SK-N-SH (cell line): ENCODE measurements at regions of chr22 and their contacts with region 1.

Region 1: GRCh38 chr22:46367707-46368191 is 32.2 kb downstream of the TRMU start:
- DNase-seq: peak; percentile 87
- H3K4me3 ChIP-seq: no peak overlapping the region
- H3K27ac ChIP-seq: no peak overlapping the region
- H3K4me1 ChIP-seq: no peaks in the 10 kb centered on the region; a peak in 1 of 4 replicates
- H3K27me3 ChIP-seq: no peaks in the 10 kb centered on the region
- CTCF ChIP-seq: peak; percentile 73
- EP300 ChIP-seq: no peak
- RAD21 ChIP-seq: peak; percentile 66

Region 2: GRCh38 chr22:46329616-46330015 is 38.1 kb before region 1 on chr22:
- CTCF ChIA-PET with region 1: no interaction called
- POLR2A ChIA-PET with region 1: no interaction called
- DNase-seq: no peak
- H3K4me3 ChIP-seq: no peak overlapping the region
- H3K27ac ChIP-seq: no peak overlapping the region
- H3K4me1 ChIP-seq: no peaks in the 10 kb centered on the region; a peak in 1 of 4 replicates
- H3K27me3 ChIP-seq: no peaks in the 10 kb centered on the region
- CTCF ChIP-seq: no peak
- EP300 ChIP-seq: no peak
- RAD21 ChIP-seq: no peak

Region 3: DNA sequence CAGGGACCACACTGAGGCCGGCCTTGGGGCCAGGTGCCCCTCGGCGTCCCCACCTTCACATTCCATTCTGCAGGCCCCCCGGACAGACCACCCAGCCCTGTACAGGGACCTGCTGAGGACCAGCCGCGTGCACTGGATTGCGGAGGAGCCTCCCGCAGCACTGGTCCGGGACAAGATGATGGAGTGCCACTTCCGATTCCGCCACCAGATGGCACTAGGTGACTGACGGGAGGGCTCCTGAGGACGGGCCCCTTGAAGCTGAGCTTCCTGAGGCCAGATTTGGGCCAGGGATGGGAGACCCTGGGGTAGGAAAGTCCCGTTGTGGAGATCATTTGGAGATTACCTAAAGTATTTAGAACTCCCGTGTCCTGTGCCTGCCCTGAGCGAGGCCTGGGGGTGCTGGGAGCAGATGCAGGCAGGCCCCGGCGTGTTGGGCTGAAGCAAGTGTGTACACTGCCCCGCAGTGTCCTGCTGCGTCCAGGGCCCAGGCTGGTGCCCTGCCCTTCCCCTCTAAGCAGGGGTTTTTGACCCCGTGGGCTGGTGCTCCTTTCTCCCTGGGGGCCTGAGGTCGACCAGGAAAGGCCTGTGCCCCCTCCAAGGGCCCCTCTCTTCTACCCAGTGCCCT is 12.3 kb before region 1 on chr22:
- CTCF ChIA-PET with region 1: interaction called, 30 read pairs
- POLR2A ChIA-PET with region 1: no interaction called
- DNase-seq: peak; percentile 92
- H3K4me3 ChIP-seq: no peak overlapping the region; a peak in 1 of 4 replicates
- H3K27ac ChIP-seq: no peak overlapping the region
- H3K4me1 ChIP-seq: no peaks in the 10 kb centered on the region
- H3K27me3 ChIP-seq: no peaks in the 10 kb centered on the region
- CTCF ChIP-seq: peak; percentile 78
- EP300 ChIP-seq: no peak
- RAD21 ChIP-seq: peak; percentile 81

Region 4: DNA sequence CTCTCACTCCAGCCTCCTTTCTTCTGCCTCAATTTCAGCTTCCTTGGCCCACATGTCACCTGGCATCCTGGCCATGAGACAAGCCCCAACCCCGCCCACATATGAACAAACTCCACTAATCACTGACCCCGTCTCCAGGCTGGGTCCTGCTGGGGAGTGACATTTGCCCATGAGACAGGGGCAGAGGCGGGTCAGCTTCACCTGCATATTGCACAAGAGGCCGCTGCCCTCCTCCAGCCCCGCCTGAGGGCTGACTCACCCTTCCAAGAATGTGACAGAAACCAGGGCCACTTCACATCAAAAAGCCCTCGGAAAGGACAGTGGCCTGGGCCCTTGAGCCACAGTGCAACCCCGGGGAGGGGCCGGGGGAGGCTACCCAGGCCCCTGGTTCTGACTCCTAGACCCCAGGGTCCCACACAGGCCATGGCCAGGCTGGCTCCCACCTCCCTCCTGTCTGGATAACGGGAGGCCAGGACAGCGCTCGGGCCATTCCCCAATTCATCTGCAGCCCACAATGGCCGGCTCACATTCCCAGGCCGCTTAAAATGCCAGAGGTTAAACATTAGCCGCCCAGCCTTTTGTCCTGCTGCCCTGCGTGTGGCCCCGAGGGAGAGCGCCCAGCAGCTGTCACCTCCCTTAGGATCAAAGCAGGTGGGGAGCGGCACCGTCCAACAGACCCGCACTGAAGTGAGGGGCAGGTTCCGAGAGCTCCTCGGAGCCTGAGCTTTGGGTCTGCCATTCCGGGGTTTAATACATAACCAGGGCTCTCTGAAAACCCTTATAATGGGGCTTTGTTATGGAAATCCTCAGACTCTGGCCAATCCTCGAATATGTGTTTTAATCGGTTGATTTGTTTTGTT is 10.0 kb after region 1 on chr22:
- CTCF ChIA-PET with region 1: interaction called, 12 read pairs
- POLR2A ChIA-PET with region 1: no interaction called
- DNase-seq: no peak
- H3K4me3 ChIP-seq: no peak overlapping the region
- H3K27ac ChIP-seq: no peak overlapping the region
- H3K4me1 ChIP-seq: no peaks in the 10 kb centered on the region; a peak in 1 of 4 replicates
- H3K27me3 ChIP-seq: no peaks in the 10 kb centered on the region
- CTCF ChIP-seq: no peak
- EP300 ChIP-seq: no peak
- RAD21 ChIP-seq: no peak

Region 5: GRCh38 chr22:46390652-46391301 is 23.0 kb after region 1 on chr22:
- CTCF ChIA-PET with region 1: interaction called, 12 read pairs
- POLR2A ChIA-PET with region 1: no interaction called
- DNase-seq: peak; percentile 81
- H3K4me3 ChIP-seq: no peak overlapping the region
- H3K27ac ChIP-seq: no peak overlapping the region
- H3K4me1 ChIP-seq: no peaks in the 10 kb centered on the region; a peak in 1 of 4 replicates
- H3K27me3 ChIP-seq: no peaks in the 10 kb centered on the region
- CTCF ChIP-seq: peak; percentile 29
- EP300 ChIP-seq: no peak
- RAD21 ChIP-seq: peak; percentile 48

Region 6: GRCh38 chr22:46536559-46537224 is 168.9 kb after region 1 on chr22:
- CTCF ChIA-PET with region 1: interaction called, 105 read pairs
- POLR2A ChIA-PET with region 1: no interaction called
- DNase-seq: peak; percentile 66
- H3K4me3 ChIP-seq: peak overlapping the region; percentile 43 to 51; a peak in 2 of 4 replicates
- H3K27ac ChIP-seq: no peak overlapping the region
- H3K4me1 ChIP-seq: peaks cover 0 to 2% of the 10 kb centered on the region in 2 experiments; a peak in 1 of 4 replicates
- H3K27me3 ChIP-seq: peaks cover 8% of the 10 kb centered on the region; the same call in 1 of the 2 replicates
- CTCF ChIP-seq: no peak
- EP300 ChIP-seq: no peak
- RAD21 ChIP-seq: no peak

Region 7: DNA sequence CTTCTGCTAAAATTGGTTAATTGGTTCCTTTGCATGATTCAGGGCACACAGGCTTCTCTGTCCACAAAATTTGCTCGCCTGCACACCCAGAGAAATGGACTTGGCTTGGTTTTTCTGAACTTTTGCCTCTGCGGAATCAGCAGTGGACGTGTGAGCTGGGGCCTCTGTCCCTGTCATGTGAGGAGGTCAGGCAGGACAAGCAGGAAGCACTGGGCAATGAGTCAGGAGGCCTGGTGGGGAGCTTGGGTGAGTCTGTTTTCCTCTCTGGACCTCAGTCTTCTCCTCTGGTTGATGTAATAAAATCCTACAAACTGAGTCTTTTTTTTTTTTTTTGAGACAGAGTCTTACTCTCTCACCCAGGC is 180.1 kb after region 1 on chr22:
- CTCF ChIA-PET with region 1: interaction called, 105 read pairs
- POLR2A ChIA-PET with region 1: no interaction called
- DNase-seq: no peak
- H3K4me3 ChIP-seq: no peak overlapping the region
- H3K27ac ChIP-seq: peak overlapping the region; percentile 76 to 79; a peak in 3 of 4 replicates
- H3K4me1 ChIP-seq: peaks cover 16 to 28% of the 10 kb centered on the region in 2 experiments; a peak in 3 of 4 replicates
- H3K27me3 ChIP-seq: no peaks in the 10 kb centered on the region
- CTCF ChIP-seq: no peak
- EP300 ChIP-seq: no peak
- RAD21 ChIP-seq: no peak